GM10248 (cell line): ENCODE measurements at regions of chrX and their contacts with region 1.

Region 1: DNA sequence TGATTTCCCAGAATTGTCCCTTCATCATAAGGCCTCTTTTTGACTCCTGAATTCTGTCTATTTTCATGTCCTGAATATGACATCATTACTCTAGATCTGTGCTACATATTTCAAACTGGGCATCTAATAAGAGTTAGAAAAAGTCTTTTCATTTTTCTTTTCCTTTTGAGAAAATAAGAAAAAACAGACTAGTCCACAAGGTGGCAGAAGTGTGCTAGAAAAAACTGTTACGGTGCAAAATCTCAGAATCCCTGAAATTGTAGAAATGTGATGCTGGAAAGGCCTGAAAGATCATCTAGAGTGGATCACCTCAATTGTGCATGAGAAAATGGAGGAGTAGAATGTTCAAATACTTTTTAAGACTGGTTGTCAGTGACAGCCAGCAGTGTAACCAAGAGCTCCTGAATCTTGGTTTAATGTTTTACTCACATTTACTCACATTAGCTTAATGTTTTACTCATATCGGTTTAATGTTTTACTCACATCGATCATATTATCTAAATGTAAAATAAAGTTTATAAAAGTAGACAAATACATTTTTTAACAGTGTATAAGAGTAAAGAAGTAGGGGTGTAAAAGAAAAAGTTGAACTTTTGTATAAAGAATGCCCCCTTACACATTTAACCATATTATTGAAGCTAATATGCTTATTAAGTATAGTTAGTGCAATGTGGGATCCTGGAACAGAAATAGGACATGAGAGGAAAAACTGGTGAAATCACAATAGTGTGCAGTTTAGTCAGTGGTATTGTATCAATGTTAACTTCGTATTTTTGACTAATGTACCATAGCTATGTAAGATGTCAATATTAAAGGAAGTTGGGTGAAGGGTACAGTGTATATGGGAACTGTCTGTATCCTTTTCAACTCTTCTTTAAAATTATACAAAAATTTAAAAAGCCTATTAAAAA is 15.2 kb downstream of the ASB11 start:
- DNase-seq: no peak
- CTCF ChIP-seq: peak; percentile 17

Region 2: GRCh38 chrX:15269618-15270521 is 30.3 kb before region 1 on chrX and contains the start of gene ASB9:
- CTCF ChIA-PET with region 1: no interaction called
- POLR2A ChIA-PET with region 1: no interaction called
- DNase-seq: no peak
- CTCF ChIP-seq: no peak

Region 3: DNA sequence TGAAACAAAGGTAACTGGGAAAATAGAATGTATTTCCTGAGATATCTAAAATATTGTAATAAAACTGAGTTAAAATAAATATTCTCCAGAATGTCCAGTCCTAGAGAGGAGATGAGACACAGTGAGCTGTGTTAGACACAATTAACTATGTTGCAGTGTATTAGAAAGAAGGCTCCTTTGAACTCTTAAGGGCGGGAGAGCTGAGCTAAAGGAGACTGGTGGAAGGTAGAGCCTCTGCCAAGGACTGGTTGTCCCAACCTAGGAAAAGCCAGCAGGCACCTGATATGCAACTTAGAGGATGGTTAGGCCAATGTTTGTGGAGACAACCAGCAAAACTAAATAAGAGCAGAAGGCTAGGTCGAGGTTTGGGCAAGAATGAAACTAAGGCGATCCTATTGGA is 10.9 kb after region 1 on chrX:
- CTCF ChIA-PET with region 1: interaction called, 11 read pairs
- POLR2A ChIA-PET with region 1: no interaction called
- DNase-seq: no peak
- CTCF ChIP-seq: no peak